ENCODE measurements at regions of chr5 and their contacts with region 1.

Region 1: GRCh38 chr5:176537608-176538504 is 654 bp upstream of the RNF44 start:
- DNase-seq: peak; percentile 99
- H3K4me3 Mint-ChIP-seq: peak overlapping the region; percentile 92
- H3K27ac Mint-ChIP-seq: peak overlapping the region; percentile 97
- H3K4me1 Mint-ChIP-seq: peaks cover 61% of the 10 kb centered on the region
- H3K27me3 Mint-ChIP-seq: no peaks in the 10 kb centered on the region

Region 2: GRCh38 chr5:175494280-175495183 is 1043.3 kb before region 1 on chr5:
- CTCF ChIA-PET with region 1: no interaction called
- POLR2A ChIA-PET with region 1: no interaction called
- intact Hi-C with region 1: loop called (anchors 10 kb)
- DNase-seq: peak; percentile 49
- H3K4me3 Mint-ChIP-seq: no peak overlapping the region
- H3K27ac Mint-ChIP-seq: peak overlapping the region; percentile 72
- H3K4me1 Mint-ChIP-seq: peaks cover 57% of the 10 kb centered on the region
- H3K27me3 Mint-ChIP-seq: no peaks in the 10 kb centered on the region

Region 3: DNA sequence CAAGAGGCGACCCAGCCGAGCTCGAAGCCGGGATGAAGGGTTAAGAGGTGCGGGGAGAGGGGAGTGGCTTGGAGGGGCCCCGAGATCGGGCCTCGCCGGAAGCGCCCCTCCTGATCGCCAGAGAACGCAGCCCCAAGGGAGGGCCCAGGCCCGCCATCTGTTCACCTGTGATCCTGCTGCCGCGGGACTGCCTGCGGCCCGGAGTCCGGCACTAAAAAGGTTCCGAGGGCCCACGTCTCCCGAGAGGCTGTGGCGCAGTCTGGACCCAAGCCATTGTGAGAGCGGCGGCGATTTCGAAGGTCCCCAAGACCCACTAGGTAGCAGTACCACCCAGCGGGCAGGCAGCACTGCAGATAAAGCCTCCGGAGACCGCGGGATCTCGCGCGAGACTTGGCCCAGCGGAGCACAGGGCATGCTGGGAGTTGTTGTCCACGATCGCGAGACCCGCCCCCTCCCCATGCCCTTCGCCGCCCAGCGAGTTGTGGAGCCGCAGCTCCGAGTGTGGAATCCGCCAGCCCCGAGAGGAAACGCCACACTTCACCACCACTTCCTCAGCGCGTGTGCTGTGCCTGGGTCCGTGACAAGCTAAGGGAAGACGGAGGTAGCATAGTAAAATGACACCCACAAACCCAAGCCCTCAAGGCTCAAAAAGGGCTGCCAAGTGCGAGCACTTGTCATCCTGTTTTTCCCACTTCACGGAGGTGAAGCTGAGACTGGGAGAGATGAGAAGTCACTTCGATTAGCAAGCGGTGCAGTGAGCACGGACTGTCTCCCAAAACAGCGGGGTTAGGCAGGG is 176.2 kb before region 1 on chr5 and contains the start of gene KIAA1191:
- CTCF ChIA-PET with region 1: interaction called, 4 read pairs
- POLR2A ChIA-PET with region 1: interaction called, 3 read pairs
- intact Hi-C with region 1: loop called (anchors 5 kb)
- DNase-seq: peak; percentile 97
- H3K4me3 Mint-ChIP-seq: peak within 1 kb of the TSS; percentile 99
- H3K27ac Mint-ChIP-seq: peak within 1 kb of the TSS; percentile 90
- H3K4me1 Mint-ChIP-seq: peaks cover 38% of the 10 kb centered on the region
- H3K27me3 Mint-ChIP-seq: no peaks in the 10 kb centered on the region
- total RNA-seq, gene KIAA1191: 35.3 to 40.3 TPM

Region 4: DNA sequence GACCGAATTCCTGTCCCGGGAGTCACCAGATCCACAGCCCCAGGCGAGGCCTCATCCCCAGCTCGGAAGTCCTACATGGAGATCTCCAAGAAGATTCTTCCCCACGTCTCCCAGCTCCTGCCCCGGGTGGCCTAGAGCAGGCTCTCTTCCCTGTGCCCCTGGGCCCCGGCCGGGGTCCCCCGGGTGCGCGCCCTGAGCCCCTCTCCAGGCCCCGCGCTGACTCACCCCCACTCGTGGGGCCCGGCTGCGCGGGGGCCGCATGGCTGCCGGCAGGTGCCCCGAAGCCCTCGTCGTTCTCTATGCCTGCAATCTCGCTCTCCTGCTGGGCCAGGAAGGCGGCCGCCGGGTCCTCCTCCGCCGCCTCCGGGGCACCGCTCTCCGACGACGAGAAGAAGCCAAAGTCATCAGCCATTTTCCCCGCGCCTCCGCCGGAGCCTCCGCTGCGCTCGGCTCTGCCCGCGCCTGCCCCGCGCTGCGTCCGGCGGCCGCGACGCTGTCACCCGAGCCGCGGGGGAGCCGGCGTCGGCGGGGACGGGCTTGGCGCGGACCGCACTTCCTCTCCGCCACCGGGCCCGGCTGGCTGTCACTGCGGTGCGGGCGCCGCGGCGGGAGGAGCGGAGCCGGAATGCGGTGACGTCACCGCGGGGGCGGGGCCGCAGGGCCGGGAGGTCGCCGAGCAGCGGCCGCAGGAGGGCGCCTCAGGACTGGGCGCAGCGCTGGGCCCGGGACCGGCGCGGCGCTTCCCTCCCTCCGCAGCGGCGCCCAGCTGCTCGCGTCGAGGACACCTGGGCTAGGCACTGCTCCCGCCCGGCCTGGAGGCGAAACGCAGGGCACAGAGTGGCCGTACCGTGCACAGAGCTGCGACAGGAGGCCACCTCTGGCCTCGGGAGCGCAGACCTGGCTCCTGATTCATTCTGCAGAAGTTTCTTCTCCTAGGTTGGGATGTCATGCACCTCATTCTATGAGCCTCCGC is 121.6 kb before region 1 on chr5 and contains the start of gene CLTB:
- CTCF ChIA-PET with region 1: interaction called, 26 read pairs
- POLR2A ChIA-PET with region 1: interaction called, 6 read pairs
- intact Hi-C with region 1: loop called (anchors 2 kb)
- DNase-seq: peak; percentile 93
- H3K4me3 Mint-ChIP-seq: peak within 1 kb of the TSS; percentile 77
- H3K27ac Mint-ChIP-seq: peak within 1 kb of the TSS; percentile 65
- H3K4me1 Mint-ChIP-seq: peaks cover 36% of the 10 kb centered on the region
- H3K27me3 Mint-ChIP-seq: no peaks in the 10 kb centered on the region
- total RNA-seq, gene CLTB: 51.5 to 57.0 TPM

Region 5: GRCh38 chr5:176486189-176486757 is 51.6 kb before region 1 on chr5:
- CTCF ChIA-PET with region 1: no interaction called
- POLR2A ChIA-PET with region 1: no interaction called
- intact Hi-C with region 1: loop called (anchors 5 kb)
- DNase-seq: no peak
- H3K4me3 Mint-ChIP-seq: no peak overlapping the region
- H3K27ac Mint-ChIP-seq: peak overlapping the region; percentile 30
- H3K4me1 Mint-ChIP-seq: peaks cover 49% of the 10 kb centered on the region
- H3K27me3 Mint-ChIP-seq: no peaks in the 10 kb centered on the region

Region 6: GRCh38 chr5:176514244-176514950 is 23.5 kb before region 1 on chr5:
- CTCF ChIA-PET with region 1: no interaction called
- POLR2A ChIA-PET with region 1: no interaction called
- intact Hi-C with region 1: no loop called
- DNase-seq: no peak
- H3K4me3 Mint-ChIP-seq: no peak overlapping the region
- H3K27ac Mint-ChIP-seq: no peak overlapping the region
- H3K4me1 Mint-ChIP-seq: peaks cover 12% of the 10 kb centered on the region
- H3K27me3 Mint-ChIP-seq: no peaks in the 10 kb centered on the region

Region 7: GRCh38 chr5:176929654-176930053 is 391.8 kb after region 1 on chr5:
- CTCF ChIA-PET with region 1: no interaction called
- POLR2A ChIA-PET with region 1: no interaction called
- intact Hi-C with region 1: no loop called
- DNase-seq: no peak
- H3K4me3 Mint-ChIP-seq: no peak overlapping the region
- H3K27ac Mint-ChIP-seq: no peak overlapping the region
- H3K4me1 Mint-ChIP-seq: peaks cover 12% of the 10 kb centered on the region
- H3K27me3 Mint-ChIP-seq: no peaks in the 10 kb centered on the region

Region 8: DNA sequence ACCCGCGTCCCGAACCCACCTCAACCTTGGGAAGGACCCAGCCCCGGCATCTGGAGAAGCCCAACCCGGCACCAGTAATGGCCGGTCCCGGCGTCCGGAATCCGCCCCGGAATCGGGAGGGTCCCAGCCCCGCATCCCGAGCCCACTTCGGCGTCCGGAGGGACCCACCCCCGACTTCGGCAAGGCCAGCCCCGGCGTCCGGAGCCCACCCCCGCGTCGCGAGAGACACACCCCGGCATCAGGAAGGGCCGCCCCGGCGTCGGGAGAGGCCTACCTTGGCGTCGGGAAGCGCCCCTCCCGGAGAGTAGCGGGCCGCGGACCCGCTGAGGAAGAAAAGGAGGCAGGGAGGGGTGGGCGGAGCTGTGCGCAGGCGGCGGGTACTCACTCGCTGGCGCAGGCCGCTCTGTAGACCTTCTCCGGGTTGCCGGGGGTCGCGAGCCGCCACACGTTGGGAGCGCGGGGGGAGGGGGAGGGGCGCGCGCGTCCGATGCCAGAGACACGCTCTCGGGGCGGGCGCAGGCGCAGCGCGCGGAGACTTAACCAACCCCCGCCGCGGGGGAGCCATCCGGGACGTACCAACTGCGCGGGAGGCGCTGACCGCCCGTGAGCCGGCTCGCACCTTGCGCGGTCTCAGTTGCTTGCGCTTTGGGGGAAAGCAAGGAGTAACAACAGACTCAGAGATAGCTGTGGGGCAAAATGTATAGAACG is 468.6 kb after region 1 on chr5 and contains the start of gene UIMC1:
- CTCF ChIA-PET with region 1: no interaction called
- POLR2A ChIA-PET with region 1: interaction called, 3 read pairs
- intact Hi-C with region 1: loop called (anchors 1 kb)
- DNase-seq: peak; percentile 94
- H3K4me3 Mint-ChIP-seq: peak within 1 kb of the TSS; percentile 91
- H3K27ac Mint-ChIP-seq: peak within 1 kb of the TSS; percentile 93
- H3K4me1 Mint-ChIP-seq: peaks cover 23% of the 10 kb centered on the region
- H3K27me3 Mint-ChIP-seq: no peaks in the 10 kb centered on the region
- total RNA-seq, gene UIMC1: 52.9 to 53.5 TPM

Region 9: GRCh38 chr5:177425801-177426565 is 888.1 kb after region 1 on chr5:
- CTCF ChIA-PET with region 1: no interaction called
- POLR2A ChIA-PET with region 1: interaction called, 5 read pairs
- intact Hi-C with region 1: loop called (anchors 2 kb)
- DNase-seq: peak; percentile 100
- H3K4me3 Mint-ChIP-seq: peak overlapping the region; percentile 87
- H3K27ac Mint-ChIP-seq: peak overlapping the region; percentile 94
- H3K4me1 Mint-ChIP-seq: peaks cover 35% of the 10 kb centered on the region
- H3K27me3 Mint-ChIP-seq: no peaks in the 10 kb centered on the region